Activated naive CD4-positive, alpha-beta T cell treated with anti-CD3 and anti-CD28 coated beads for 36 hours (primary cell): ENCODE measurements at regions of chr1 and their contacts with region 1.

Region 1: DNA sequence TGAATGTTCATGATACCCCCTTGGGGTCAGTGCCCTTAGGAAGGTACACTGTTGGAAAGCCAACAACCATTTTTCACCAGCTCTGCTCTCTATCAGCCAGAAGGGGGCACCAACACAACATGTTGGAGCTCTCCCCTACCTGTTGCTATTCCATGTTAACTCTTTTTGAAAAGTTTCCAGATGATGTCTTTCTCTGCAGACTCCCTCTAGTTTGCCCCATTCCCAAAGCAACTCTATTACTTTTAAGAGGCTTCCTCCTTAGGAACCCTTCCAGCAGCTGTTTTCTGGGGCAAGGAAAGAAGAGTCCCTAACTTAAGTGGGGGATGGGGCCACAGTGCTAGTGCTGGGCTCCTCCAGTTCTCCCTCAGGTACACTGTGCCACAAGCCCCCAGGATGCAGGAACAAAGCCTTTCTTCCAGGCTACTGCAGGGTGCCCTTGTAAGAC is 22.9 kb upstream of the NDC1 start:
- DNase-seq: peak; percentile 67
- H3K4me3 Mint-ChIP-seq: no peak overlapping the region
- H3K27ac Mint-ChIP-seq: no peak overlapping the region
- H3K4me1 Mint-ChIP-seq: peaks cover 18% of the 10 kb centered on the region
- H3K27me3 Mint-ChIP-seq: no peaks in the 10 kb centered on the region

Region 2: GRCh38 chr1:53847980-53848379 is 13.0 kb before region 1 on chr1:
- CTCF ChIA-PET with region 1: interaction called, 10 read pairs
- intact Hi-C with region 1: no loop called
- DNase-seq: no peak
- H3K4me3 Mint-ChIP-seq: no peak overlapping the region
- H3K27ac Mint-ChIP-seq: no peak overlapping the region
- H3K4me1 Mint-ChIP-seq: no peaks in the 10 kb centered on the region
- H3K27me3 Mint-ChIP-seq: no peaks in the 10 kb centered on the region

Region 3: GRCh38 chr1:53878492-53879105 is 17.6 kb after region 1 on chr1:
- CTCF ChIA-PET with region 1: interaction called, 27 read pairs
- intact Hi-C with region 1: no loop called
- DNase-seq: no peak
- H3K4me3 Mint-ChIP-seq: no peak overlapping the region
- H3K27ac Mint-ChIP-seq: no peak overlapping the region
- H3K4me1 Mint-ChIP-seq: peaks cover 3% of the 10 kb centered on the region
- H3K27me3 Mint-ChIP-seq: no peaks in the 10 kb centered on the region

Region 4: GRCh38 chr1:53919675-53920066 is 58.7 kb after region 1 on chr1:
- CTCF ChIA-PET with region 1: no interaction called
- intact Hi-C with region 1: loop called (anchors 2 kb)
- DNase-seq: peak; percentile 38
- H3K4me3 Mint-ChIP-seq: no peak overlapping the region
- H3K27ac Mint-ChIP-seq: peak overlapping the region; percentile 14
- H3K4me1 Mint-ChIP-seq: peaks cover 37% of the 10 kb centered on the region
- H3K27me3 Mint-ChIP-seq: no peaks in the 10 kb centered on the region

Region 5: DNA sequence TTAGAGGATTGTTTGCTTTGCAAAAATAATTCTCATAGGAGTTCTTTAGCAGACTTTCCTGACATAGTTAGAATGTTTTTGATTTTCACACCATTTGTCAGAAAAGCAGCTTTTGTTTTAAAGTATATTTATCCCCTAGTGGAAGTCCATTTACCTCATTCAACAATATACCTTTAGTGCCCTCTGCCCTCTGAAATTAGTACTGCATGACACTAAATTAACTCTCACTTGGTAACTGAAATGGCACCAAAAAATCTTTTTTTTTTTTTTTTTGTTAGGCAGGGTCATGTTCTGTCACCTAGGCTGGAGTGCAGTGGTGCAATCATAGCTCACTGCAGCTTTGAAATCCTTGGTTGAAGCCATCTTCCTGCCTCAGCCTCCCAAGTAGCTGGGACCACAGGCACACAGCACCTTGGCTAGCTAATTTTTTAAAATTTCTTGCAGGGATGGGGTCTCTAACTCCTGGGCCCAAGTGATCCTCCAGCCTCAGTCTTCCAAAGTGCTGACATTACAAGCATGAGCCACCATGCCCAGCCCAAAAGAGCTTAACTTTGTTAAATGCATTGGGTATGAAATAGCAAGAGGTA is 98.8 kb after region 1 on chr1:
- CTCF ChIA-PET with region 1: interaction called, 103 read pairs
- intact Hi-C with region 1: loop called (anchors 1 kb)
- DNase-seq: no peak
- H3K4me3 Mint-ChIP-seq: no peak overlapping the region
- H3K27ac Mint-ChIP-seq: no peak overlapping the region
- H3K4me1 Mint-ChIP-seq: peaks cover 11% of the 10 kb centered on the region
- H3K27me3 Mint-ChIP-seq: no peaks in the 10 kb centered on the region

Region 6: DNA sequence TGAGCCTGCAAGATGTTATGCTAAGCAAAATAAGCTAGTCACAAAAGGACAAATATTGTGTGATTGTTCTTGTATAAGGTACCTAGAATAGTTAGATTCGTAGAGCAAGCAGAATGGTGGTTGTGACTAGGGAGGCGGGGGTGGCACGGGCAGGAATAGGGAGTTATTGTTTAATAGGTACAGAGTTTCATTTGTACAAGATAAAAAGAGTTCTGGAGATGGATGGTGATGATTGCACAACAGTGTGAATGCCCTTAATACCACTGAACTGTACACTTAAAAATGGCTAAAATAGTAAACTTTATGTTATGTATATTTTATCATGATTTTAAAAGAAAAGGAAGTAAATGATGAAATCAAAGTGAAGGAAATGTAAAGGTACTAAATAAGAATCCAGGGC is 105.8 kb after region 1 on chr1:
- CTCF ChIA-PET with region 1: interaction called, 103 read pairs
- intact Hi-C with region 1: no loop called
- DNase-seq: no peak
- H3K4me3 Mint-ChIP-seq: no peak overlapping the region
- H3K27ac Mint-ChIP-seq: no peak overlapping the region
- H3K4me1 Mint-ChIP-seq: no peaks in the 10 kb centered on the region
- H3K27me3 Mint-ChIP-seq: no peaks in the 10 kb centered on the region

Region 7: GRCh38 chr1:54081306-54082270 is 220.6 kb after region 1 on chr1:
- CTCF ChIA-PET with region 1: interaction called, 9 read pairs
- intact Hi-C with region 1: loop called (anchors 5 kb)
- DNase-seq: peak; percentile 77
- H3K4me3 Mint-ChIP-seq: no peak overlapping the region
- H3K27ac Mint-ChIP-seq: no peak overlapping the region
- H3K4me1 Mint-ChIP-seq: peaks cover 5% of the 10 kb centered on the region
- H3K27me3 Mint-ChIP-seq: no peaks in the 10 kb centered on the region